ENCODE measurements at regions of chr10 and their contacts with region 1.

Region 1: GRCh38 chr10:104580774-104581675 is 60.1 kb upstream of the SORCS3 start:
- DNase-seq: peak; percentile 27 to 76 (median 65)
- ATAC-seq: peak; percentile 67
- H3K4me3 ChIP-seq: no peak overlapping the region
- H3K4me3 Mint-ChIP-seq: no peak overlapping the region
- H3K27ac ChIP-seq: no peak overlapping the region
- H3K27ac Mint-ChIP-seq: no peak overlapping the region
- H3K4me1 ChIP-seq: no peaks in the 10 kb centered on the region
- H3K4me1 Mint-ChIP-seq: peaks cover 10% of the 10 kb centered on the region
- H3K27me3 ChIP-seq: no peaks in the 10 kb centered on the region
- H3K27me3 Mint-ChIP-seq: peaks cover 25% of the 10 kb centered on the region
- CTCF ChIP-seq: peak; percentile 86

Region 2: GRCh38 chr10:104614245-104614831 is 33.3 kb after region 1 on chr10:
- CTCF ChIA-PET with region 1: interaction called, 3 read pairs
- POLR2A ChIA-PET with region 1: no interaction called
- intact Hi-C with region 1: loop called in 1 of 2 experiments (anchors 2 kb)
- DNase-seq: peak in 2 of 9 experiments; percentile 23 to 26
- ATAC-seq: no peak
- H3K4me3 ChIP-seq: no peak overlapping the region
- H3K4me3 Mint-ChIP-seq: no peak overlapping the region
- H3K27ac ChIP-seq: no peak overlapping the region
- H3K27ac Mint-ChIP-seq: no peak overlapping the region
- H3K4me1 ChIP-seq: no peaks in the 10 kb centered on the region
- H3K4me1 Mint-ChIP-seq: no peaks in the 10 kb centered on the region
- H3K27me3 ChIP-seq: no peaks in the 10 kb centered on the region
- H3K27me3 Mint-ChIP-seq: peaks cover 16% of the 10 kb centered on the region
- CTCF ChIP-seq: peak; percentile 31

Region 3: GRCh38 chr10:104666106-104666505 is 85.1 kb after region 1 on chr10:
- CTCF ChIA-PET with region 1: no interaction called
- POLR2A ChIA-PET with region 1: no interaction called
- intact Hi-C with region 1: no loop called
- DNase-seq: no peak
- ATAC-seq: no peak
- H3K4me3 ChIP-seq: no peak overlapping the region
- H3K4me3 Mint-ChIP-seq: no peak overlapping the region
- H3K27ac ChIP-seq: no peak overlapping the region
- H3K27ac Mint-ChIP-seq: no peak overlapping the region
- H3K4me1 ChIP-seq: no peaks in the 10 kb centered on the region
- H3K4me1 Mint-ChIP-seq: no peaks in the 10 kb centered on the region
- H3K27me3 ChIP-seq: no peaks in the 10 kb centered on the region
- H3K27me3 Mint-ChIP-seq: peaks cover 12% of the 10 kb centered on the region
- CTCF ChIP-seq: no peak

Region 4: GRCh38 chr10:104925232-104925851 is 344.3 kb after region 1 on chr10:
- CTCF ChIA-PET with region 1: no interaction called
- POLR2A ChIA-PET with region 1: no interaction called
- intact Hi-C with region 1: loop called (anchors 1 to 5 kb)
- DNase-seq: peak in 4 of 9 experiments; percentile 13 to 45 (median 22)
- ATAC-seq: no peak
- H3K4me3 ChIP-seq: no peak overlapping the region
- H3K4me3 Mint-ChIP-seq: no peak overlapping the region
- H3K27ac ChIP-seq: no peak overlapping the region
- H3K27ac Mint-ChIP-seq: no peak overlapping the region
- H3K4me1 ChIP-seq: no peaks in the 10 kb centered on the region
- H3K4me1 Mint-ChIP-seq: no peaks in the 10 kb centered on the region
- H3K27me3 ChIP-seq: no peaks in the 10 kb centered on the region
- H3K27me3 Mint-ChIP-seq: no peaks in the 10 kb centered on the region
- CTCF ChIP-seq: no peak